ENCODE measurements at regions of chr1 and their contacts with region 1.

Region 1: GRCh38 chr1:45569962-45570581 is 13.8 kb upstream of the NASP start:
- DNase-seq: peak; percentile 77
- H3K4me3 Mint-ChIP-seq: no peak overlapping the region
- H3K27ac Mint-ChIP-seq: no peak overlapping the region
- H3K4me1 Mint-ChIP-seq: no peaks in the 10 kb centered on the region
- H3K27me3 Mint-ChIP-seq: no peaks in the 10 kb centered on the region
- CTCF ChIP-seq: peak; percentile 97

Region 2: GRCh38 chr1:45499415-45499769 is 70.7 kb before region 1 on chr1:
- CTCF ChIA-PET with region 1: interaction called, 15 read pairs
- POLR2A ChIA-PET with region 1: interaction called, 4 read pairs
- intact Hi-C with region 1: no loop called
- DNase-seq: no peak
- H3K4me3 Mint-ChIP-seq: peak overlapping the region; percentile 97
- H3K27ac Mint-ChIP-seq: peak overlapping the region; percentile 94
- H3K4me1 Mint-ChIP-seq: peaks cover 26% of the 10 kb centered on the region
- H3K27me3 Mint-ChIP-seq: no peaks in the 10 kb centered on the region
- CTCF ChIP-seq: no peak

Region 3: DNA sequence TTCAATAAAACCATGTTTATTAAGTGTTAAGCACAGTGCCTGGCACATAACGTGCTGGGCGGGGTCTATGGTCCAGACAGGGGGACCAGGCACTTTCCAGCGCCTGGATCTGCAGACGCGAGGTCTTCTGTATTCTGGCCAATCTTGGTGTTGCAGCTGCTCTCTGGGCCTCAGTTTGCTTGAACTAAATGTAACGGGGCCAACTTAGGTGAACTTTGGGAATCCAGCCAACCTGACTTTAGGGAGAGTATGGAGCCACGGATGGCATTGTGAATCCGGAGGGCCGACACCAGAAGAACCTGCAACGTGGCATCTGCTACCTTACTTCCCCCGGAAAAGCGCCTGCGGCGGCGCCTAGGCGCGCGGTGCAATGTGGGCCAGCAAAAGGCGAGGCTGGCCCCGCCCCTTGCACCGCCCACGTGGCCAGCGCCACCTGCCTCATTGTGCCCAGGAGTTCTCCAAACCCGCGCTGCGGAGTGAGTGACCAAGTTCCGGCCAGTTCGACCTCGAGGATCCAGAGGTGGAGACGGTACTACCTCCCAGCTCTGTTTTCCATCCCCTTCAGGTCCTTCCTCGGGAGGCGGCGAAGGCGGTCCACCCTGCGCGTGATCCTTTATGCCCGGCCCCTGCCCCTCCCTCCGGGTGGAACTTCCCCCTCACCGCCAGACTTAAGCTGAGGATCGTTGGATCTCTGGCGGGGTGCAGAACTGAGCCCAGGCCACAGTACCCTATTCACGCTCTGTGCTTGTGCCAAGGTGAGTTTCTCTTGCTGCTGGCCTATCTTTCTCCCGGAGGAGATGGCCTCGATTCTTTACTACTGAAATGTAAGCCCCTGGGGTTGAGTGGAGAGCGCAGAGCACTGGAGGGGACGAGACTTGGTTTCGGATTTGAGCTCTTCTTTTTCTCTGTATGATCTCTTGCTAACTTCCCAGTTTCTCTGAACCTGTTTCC is 19.4 kb before region 1 on chr1 and contains the start of gene AKR1A1:
- CTCF ChIA-PET with region 1: interaction called, 30 read pairs
- POLR2A ChIA-PET with region 1: interaction called, 13 read pairs
- intact Hi-C with region 1: no loop called
- DNase-seq: peak; percentile 94
- H3K4me3 Mint-ChIP-seq: peak within 1 kb of the TSS; percentile 97
- H3K27ac Mint-ChIP-seq: peak within 1 kb of the TSS; percentile 94
- H3K4me1 Mint-ChIP-seq: peaks cover 12% of the 10 kb centered on the region
- H3K27me3 Mint-ChIP-seq: no peaks in the 10 kb centered on the region
- CTCF ChIP-seq: no peak
- total RNA-seq, gene AKR1A1: 108 and 142 TPM in 2 replicates

Region 4: GRCh38 chr1:45583264-45583665 is 13.2 kb after region 1 on chr1:
- CTCF ChIA-PET with region 1: interaction called, 39 read pairs
- POLR2A ChIA-PET with region 1: interaction called, 5 read pairs
- intact Hi-C with region 1: no loop called
- DNase-seq: peak; percentile 97
- H3K4me3 Mint-ChIP-seq: peak overlapping the region; percentile 89
- H3K27ac Mint-ChIP-seq: peak overlapping the region; percentile 68
- H3K4me1 Mint-ChIP-seq: peaks cover 15% of the 10 kb centered on the region
- H3K27me3 Mint-ChIP-seq: no peaks in the 10 kb centered on the region
- CTCF ChIP-seq: no peak